ENCODE measurements at regions of chr6 and their contacts with region 1.

Region 1: DNA sequence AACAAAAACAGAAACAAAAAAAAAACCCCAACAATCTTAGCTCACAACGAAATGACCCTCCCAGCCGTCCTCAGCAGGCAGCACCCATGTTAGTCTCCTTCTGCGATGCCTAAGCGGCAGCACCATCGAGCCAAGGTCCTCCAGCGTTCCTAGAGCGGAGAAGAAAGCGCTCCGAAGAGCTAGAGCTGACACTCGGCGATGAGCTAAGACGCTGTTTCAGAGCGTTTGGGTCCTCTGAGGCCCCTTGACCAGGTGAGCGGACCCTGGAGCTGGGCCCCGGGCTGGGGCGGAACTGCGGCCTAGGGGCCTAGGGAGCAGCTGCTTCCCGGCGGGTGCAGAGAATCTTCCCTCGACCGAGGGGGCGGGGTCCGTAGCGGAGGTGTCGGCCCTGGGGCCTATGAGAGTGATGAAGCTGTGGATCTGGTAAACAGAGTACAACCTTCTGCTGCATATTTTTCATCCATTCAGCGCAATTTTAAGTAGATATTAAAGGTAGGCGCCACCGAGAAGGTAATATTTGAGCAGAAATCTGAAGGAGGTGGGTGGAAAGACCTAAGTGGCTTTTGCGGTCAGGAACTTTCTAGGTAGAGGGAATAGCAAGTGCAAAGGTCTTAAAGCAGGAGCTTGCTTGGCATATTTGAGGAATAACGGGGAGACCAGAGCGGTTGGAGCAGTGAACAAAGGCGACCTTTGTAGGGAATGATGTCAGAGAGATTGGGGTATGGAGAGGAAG is at the start of gene ZSCAN26:
- DNase-seq: peak; percentile 92
- ATAC-seq: peak; percentile 98
- H3K4me3 Mint-ChIP-seq: no peak within 1 kb of the TSS
- H3K27ac Mint-ChIP-seq: no peak within 1 kb of the TSS
- H3K4me1 Mint-ChIP-seq: peaks cover 15% of the 10 kb centered on the region
- H3K27me3 Mint-ChIP-seq: peaks cover 8% of the 10 kb centered on the region
- total RNA-seq, gene ZSCAN26: 6.7 to 9.7 TPM

Region 2: GRCh38 chr6:28252009-28252975 is 14.8 kb before region 1 on chr6 and contains the start of gene ZKSCAN4:
- CTCF ChIA-PET with region 1: interaction called, 17 read pairs
- POLR2A ChIA-PET with region 1: interaction called, 27 read pairs
- DNase-seq: peak; percentile 87
- ATAC-seq: peak; percentile 78
- H3K4me3 Mint-ChIP-seq: peak within 1 kb of the TSS; percentile 92
- H3K27ac Mint-ChIP-seq: peak within 1 kb of the TSS; percentile 87
- H3K4me1 Mint-ChIP-seq: peaks cover 33% of the 10 kb centered on the region
- H3K27me3 Mint-ChIP-seq: no peaks in the 10 kb centered on the region
- total RNA-seq, gene ZKSCAN4: 6.9 to 7.7 TPM

Region 3: GRCh38 chr6:28462401-28462800 is 195.3 kb after region 1 on chr6:
- CTCF ChIA-PET with region 1: no interaction called
- POLR2A ChIA-PET with region 1: no interaction called
- DNase-seq: peak; percentile 47
- ATAC-seq: peak; percentile 58
- H3K4me3 Mint-ChIP-seq: no peak overlapping the region
- H3K27ac Mint-ChIP-seq: no peak overlapping the region
- H3K4me1 Mint-ChIP-seq: peaks cover 9% of the 10 kb centered on the region
- H3K27me3 Mint-ChIP-seq: peaks cover 65% of the 10 kb centered on the region

Measured in activated CD8-positive, alpha-beta T cell treated with anti-CD3 and anti-CD28 coated beads, Interleukin-2, amount 10 ng/mL, durations not matched to agents 7 days and 5 days (primary cell).